ENCODE measurements at regions of chr3 and their contacts with region 1.

Region 1: GRCh38 chr3:151093905-151094304 is 8.4 kb downstream of the MED12L start:
- DNase-seq: peak in 2 of 3 donors; percentile 37 to 46
- H3K4me3 ChIP-seq: peak overlapping the region in 1 of 7 experiments; percentile 48
- H3K27ac ChIP-seq: peak overlapping the region; percentile 2 to 8
- H3K4me1 ChIP-seq: peaks cover 4 to 75% (median 37%) of the 10 kb centered on the region in 4 experiments
- H3K27me3 ChIP-seq: no peaks in the 10 kb centered on the region

Region 2: DNA sequence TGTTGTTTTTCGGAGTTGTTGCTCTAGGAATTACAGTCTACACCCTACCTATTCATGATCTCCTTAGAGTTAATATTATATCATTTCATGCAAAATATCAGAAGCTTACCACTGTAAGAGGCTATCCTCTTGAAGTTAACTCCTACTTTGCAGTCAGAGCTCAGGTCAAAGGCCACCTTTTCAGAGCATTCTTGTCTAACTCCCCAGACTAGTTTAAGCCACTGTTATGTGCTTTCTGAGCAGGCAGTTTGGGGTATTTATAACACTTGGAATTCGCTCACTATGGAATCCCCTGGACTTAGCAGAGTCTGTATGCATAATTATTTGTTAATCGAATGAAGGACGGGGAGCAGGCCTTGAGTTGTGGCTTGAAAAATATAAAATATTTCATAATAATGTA is 13.3 kb after region 1 on chr3:
- CTCF ChIA-PET with region 1: interaction called, 39 read pairs
- POLR2A ChIA-PET with region 1: interaction called, 3 read pairs
- DNase-seq: no peak
- H3K4me3 ChIP-seq: no peak overlapping the region
- H3K27ac ChIP-seq: no peak overlapping the region
- H3K4me1 ChIP-seq: peaks cover 0 to 47% (median 15%) of the 10 kb centered on the region in 4 experiments
- H3K27me3 ChIP-seq: no peaks in the 10 kb centered on the region

Region 3: DNA sequence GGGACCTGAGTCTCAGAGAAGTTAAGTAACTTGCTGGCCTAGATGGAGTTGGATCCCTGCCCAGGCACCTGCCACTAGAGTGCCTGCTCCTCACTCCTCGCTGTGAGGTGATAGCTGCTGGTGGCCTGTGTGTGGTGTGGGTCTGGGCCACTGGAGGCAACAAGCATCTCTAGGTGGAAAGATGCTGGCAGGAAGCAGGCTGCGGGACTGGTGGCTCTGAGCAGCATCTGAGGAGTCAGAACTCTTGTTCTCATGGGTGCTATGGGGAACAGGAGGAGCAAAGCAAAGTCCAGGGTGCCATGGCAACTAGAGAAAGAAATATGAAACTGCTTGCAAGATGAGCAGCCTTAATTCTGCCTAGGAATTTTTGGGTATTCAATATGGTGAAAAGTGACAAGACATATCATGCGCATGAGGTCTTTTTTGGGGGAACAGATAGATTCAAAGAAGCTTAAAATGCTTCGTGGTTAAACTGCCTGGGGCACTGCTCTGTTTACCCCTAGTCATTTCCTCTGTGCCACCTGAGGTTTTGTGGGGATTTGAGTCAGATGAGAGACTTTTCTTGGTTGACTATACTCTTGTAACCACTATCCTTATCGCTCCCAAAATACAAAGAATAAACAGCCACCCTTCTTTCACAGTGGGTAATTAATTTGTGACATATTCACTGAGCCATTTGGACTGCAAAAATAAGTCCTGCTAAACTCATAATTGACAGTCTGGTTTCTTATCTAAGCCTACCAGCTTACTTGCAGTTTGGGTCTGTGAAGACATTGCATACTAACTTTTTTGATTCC is 41.8 kb after region 1 on chr3:
- CTCF ChIA-PET with region 1: interaction called, 250 read pairs
- POLR2A ChIA-PET with region 1: interaction called, 5 read pairs
- DNase-seq: peak; percentile 93 to 99 (median 98)
- H3K4me3 ChIP-seq: peak overlapping the region in 4 of 7 experiments; percentile 38 to 56 (median 48)
- H3K27ac ChIP-seq: peak overlapping the region; percentile 87 to 92
- H3K4me1 ChIP-seq: peaks cover 18 to 65% (median 37%) of the 10 kb centered on the region in 4 experiments
- H3K27me3 ChIP-seq: no peaks in the 10 kb centered on the region

Region 4: GRCh38 chr3:151210676-151211381 is 116.9 kb after region 1 on chr3:
- CTCF ChIA-PET with region 1: no interaction called
- POLR2A ChIA-PET with region 1: no interaction called
- DNase-seq: peak; percentile 61 to 80 (median 74)
- H3K4me3 ChIP-seq: peak overlapping the region in 4 of 7 experiments; percentile 22 to 66 (median 40)
- H3K27ac ChIP-seq: peak overlapping the region in 1 of 2 experiments; percentile 68
- H3K4me1 ChIP-seq: peaks cover 5 to 36% (median 12%) of the 10 kb centered on the region in 4 experiments
- H3K27me3 ChIP-seq: no peaks in the 10 kb centered on the region